ENCODE measurements at regions of chr13 and their contacts with region 1.

Region 1: DNA sequence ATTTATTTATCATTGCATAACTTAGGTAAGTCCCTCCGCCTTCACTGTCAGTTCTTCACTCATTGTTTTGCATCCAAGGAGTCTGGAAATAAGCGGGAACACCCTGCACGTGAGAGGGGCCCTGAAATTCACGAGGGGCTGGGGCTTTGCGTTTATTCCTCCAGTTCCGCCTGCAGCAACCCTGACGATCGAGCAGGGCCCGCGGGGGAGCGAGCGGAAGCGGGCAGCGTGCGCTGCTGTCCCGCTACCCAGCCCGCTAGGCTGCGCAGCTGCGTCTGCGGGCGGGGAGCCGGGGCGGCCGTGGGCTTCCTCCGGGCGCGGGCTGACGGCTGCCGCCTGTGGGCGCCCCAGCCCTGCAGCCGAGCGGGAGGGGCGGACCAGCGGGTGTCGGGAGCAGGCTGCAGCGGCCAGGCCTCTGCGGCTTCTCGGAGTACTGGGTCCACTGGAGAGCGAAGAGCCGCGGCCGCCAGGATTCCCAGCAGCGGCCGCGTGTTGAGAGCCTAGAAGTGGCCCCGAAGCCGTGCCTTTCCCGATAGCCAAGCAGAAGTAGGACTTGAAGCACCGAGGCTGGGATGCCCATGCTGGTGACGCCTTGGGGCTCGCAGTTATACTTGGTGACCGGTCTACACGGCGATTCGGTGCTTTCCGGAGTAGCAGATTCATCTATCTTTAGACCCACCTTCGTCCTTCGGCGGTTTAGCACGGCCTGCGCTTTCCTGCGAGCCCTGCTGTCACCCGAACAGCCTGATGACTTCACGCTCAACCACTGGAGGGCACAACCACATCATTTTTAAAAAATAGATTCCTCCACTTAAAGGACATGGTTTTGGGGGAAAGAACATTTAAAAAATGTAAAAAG is 32.9 kb upstream of the SACS start:
- DNase-seq: peak; percentile 66 to 88 (median 76)
- H3K4me3 ChIP-seq: peak overlapping the region in 2 of 4 donors; percentile 42 to 49
- H3K27ac ChIP-seq: peak overlapping the region in 4 of 5 donors; percentile 11 to 82 (median 42)
- H3K4me1 ChIP-seq: peaks cover 7 to 14% of the 10 kb centered on the region in 2 donors
- H3K27me3 ChIP-seq: no peaks in the 10 kb centered on the region
- CTCF ChIP-seq: peak; percentile 29 to 86 (median 66)
- POLR2A ChIP-seq: no peak

Region 2: DNA sequence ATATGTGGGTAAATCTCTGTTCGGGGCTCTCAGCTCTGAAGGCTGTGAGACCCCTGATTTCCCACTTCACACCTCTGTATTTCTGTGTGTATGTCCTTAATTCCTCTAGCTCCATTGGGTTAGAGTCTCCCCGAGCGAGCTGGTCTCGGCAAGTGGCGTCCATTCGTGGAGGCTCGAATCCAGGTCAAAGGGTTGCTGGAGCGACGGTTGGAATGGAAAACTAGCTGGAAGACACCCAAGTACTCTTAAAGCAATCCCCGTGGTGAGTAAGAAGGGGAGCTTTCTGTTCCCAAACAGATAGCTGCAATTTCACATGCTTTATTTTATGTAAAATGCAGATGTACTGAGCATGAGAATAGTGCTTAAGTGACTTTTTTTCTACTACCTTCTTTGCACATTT is 563.1 kb before region 1 on chr13:
- intact Hi-C with region 1: no loop called
- DNase-seq: no peak
- H3K4me3 ChIP-seq: no peak overlapping the region
- H3K27ac ChIP-seq: no peak overlapping the region
- H3K4me1 ChIP-seq: no peaks in the 10 kb centered on the region
- H3K27me3 ChIP-seq: no peaks in the 10 kb centered on the region
- CTCF ChIP-seq: no peak
- POLR2A ChIP-seq: no peak

Region 3: GRCh38 chr13:23871616-23872220 is 405.3 kb after region 1 on chr13:
- intact Hi-C with region 1: loop called (anchors 5 kb)
- DNase-seq: no peak
- H3K4me3 ChIP-seq: no peak overlapping the region
- H3K27ac ChIP-seq: no peak overlapping the region
- H3K4me1 ChIP-seq: no peaks in the 10 kb centered on the region
- H3K27me3 ChIP-seq: no peaks in the 10 kb centered on the region
- CTCF ChIP-seq: peak; percentile 31 to 82 (median 70)
- POLR2A ChIP-seq: no peak

Measured in adrenal gland (tissue), 19 donors.